ENCODE measurements at regions of chr17 and their contacts with region 1.

Region 1: DNA sequence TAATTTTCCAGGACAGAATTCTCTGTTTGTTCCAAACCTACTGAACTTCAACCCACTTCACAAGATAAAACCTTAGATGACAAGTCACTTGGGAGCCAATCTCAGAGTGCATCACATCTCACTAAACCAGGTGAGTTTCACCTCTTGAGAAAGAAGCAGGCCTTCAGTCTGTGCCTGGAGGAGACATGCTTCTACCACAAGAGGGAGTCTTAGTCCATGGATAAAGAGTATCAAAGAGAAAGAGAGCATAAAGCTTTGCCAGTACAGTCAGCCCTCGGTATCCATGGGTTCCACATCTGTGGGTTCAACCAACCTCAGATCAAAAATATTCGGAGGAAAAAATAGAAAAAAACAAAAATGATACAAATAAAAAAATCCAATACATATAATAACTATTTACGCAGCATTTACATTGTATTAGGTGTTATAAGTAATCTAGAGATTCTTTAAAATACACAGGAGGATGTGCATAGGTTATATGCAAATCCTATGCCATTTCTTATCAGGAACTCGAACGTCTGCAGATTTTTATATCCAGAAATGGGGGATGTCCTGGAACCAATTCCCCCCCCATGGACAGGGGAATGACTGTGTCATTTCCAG is 37.7 kb downstream of the DUSP14 start:
- DNase-seq: peak; percentile 44
- H3K4me3 Mint-ChIP-seq: no peak overlapping the region
- H3K27ac Mint-ChIP-seq: no peak overlapping the region
- H3K4me1 Mint-ChIP-seq: peaks cover 7% of the 10 kb centered on the region
- H3K27me3 Mint-ChIP-seq: no peaks in the 10 kb centered on the region

Region 2: DNA sequence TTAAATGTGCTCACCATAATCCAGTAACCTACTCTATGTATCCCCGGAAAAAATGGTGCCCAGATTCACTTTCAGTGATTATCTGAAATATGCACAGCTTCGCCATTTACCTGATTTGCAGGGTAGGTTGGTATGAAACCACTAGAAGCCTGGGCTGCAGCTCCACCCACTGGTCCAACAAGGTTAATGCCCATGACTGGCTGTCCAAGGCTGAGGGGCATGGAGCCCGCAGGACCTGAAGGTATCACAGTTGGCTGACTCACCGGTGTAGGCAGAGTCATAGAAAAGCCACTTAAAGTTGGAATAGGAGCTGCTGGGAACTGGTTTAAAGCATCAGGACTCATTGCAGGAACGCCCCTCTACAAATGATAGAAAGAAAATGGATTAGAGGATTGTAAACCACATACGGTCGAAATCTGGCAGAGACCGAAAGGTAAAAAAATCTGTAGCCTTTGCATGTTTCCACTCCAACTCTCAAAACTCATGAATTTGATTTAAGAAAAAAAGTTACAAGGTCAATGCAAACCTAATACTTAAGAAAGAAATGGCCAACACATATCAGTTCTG is 43.3 kb after region 1 on chr17:
- CTCF ChIA-PET with region 1: interaction called, 9 read pairs
- intact Hi-C with region 1: loop called (anchors 1 kb)
- DNase-seq: peak; percentile 62
- H3K4me3 Mint-ChIP-seq: no peak overlapping the region
- H3K27ac Mint-ChIP-seq: no peak overlapping the region
- H3K4me1 Mint-ChIP-seq: no peaks in the 10 kb centered on the region
- H3K27me3 Mint-ChIP-seq: no peaks in the 10 kb centered on the region

Region 3: GRCh38 chr17:37585066-37585465 is 57.7 kb after region 1 on chr17:
- CTCF ChIA-PET with region 1: no interaction called
- intact Hi-C with region 1: no loop called
- DNase-seq: no peak
- H3K4me3 Mint-ChIP-seq: no peak overlapping the region
- H3K27ac Mint-ChIP-seq: no peak overlapping the region
- H3K4me1 Mint-ChIP-seq: peaks cover 14% of the 10 kb centered on the region
- H3K27me3 Mint-ChIP-seq: no peaks in the 10 kb centered on the region

Region 4: DNA sequence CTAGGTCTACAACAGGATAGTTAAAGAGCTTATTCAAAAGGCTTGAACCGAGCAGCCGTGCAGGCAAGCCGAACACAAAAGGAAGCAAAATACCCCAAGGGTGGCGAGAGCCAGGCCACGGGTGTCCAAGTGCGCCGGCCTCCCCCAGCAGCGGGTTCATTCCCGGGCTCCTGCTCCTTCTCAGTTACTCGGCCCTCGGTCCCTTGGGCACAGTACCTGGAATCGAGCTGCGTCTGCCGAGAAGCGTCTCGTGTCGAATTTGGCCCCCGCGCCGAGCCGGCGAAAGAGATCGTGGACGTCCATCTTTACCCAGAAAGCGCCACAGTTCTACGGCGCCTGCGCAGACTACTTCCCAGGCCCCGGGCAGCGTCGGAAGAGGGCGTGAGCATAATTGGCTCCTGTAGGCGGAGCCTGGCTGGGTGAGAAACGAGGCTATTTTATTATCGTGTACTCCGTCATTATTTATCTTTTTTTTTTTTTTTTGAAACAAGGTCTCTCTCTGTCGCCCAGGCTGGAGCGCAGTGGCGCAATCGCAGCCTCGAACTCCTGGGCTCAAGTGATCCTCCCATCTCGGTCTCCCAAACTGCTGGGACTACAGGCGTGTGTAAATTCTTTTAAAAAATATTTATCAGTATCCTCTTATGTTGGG is 115.9 kb after region 1 on chr17 and contains the start of gene DDX52:
- CTCF ChIA-PET with region 1: interaction called, 3 read pairs
- intact Hi-C with region 1: loop called (anchors 5 kb)
- DNase-seq: peak; percentile 93
- H3K4me3 Mint-ChIP-seq: peak within 1 kb of the TSS; percentile 87
- H3K27ac Mint-ChIP-seq: peak within 1 kb of the TSS; percentile 81
- H3K4me1 Mint-ChIP-seq: peaks cover 23% of the 10 kb centered on the region
- H3K27me3 Mint-ChIP-seq: peaks cover 13% of the 10 kb centered on the region
- total RNA-seq, gene DDX52: 18.5 to 20.2 TPM

Region 5: DNA sequence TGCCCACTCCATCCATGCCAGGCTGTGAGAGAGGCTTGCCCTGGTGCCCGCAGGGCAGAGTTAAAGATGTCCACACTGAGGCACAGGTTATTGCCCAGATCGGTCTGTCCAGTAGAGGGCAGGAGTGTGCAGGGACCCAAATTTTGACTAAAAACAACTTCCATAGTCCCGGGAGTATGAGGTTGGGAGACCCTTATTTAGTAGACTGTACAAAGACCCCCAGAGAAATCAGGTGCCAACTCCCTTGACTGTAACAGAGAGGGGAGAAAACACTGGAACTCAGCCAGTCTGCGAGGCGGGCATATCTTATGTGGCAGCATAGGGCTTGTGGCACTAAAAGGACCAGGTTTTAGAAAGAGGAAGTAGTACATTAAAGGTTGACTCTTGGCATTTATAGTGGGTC is 174.1 kb after region 1 on chr17:
- CTCF ChIA-PET with region 1: no interaction called
- intact Hi-C with region 1: loop called (anchors 5 kb)
- DNase-seq: peak; percentile 70
- H3K4me3 Mint-ChIP-seq: no peak overlapping the region
- H3K27ac Mint-ChIP-seq: no peak overlapping the region
- H3K4me1 Mint-ChIP-seq: peaks cover 20% of the 10 kb centered on the region
- H3K27me3 Mint-ChIP-seq: peaks cover 14% of the 10 kb centered on the region

Region 6: GRCh38 chr17:37770631-37771518 is 243.5 kb after region 1 on chr17:
- CTCF ChIA-PET with region 1: no interaction called
- intact Hi-C with region 1: loop called (anchors 5 kb)
- DNase-seq: peak; percentile 72
- H3K4me3 Mint-ChIP-seq: no peak overlapping the region
- H3K27ac Mint-ChIP-seq: no peak overlapping the region
- H3K4me1 Mint-ChIP-seq: peaks cover 22% of the 10 kb centered on the region
- H3K27me3 Mint-ChIP-seq: peaks cover 27% of the 10 kb centered on the region

Measured in activated naive CD4-positive, alpha-beta T cell treated with anti-CD3 and anti-CD28 coated beads for 36 hours (primary cell).